Panc1 (cell line): ENCODE measurements at regions of chr19 and their contacts with region 1.

Region 1: GRCh38 chr19:33292595-33293441 is 9.5 kb downstream of the CEBPA start:
- DNase-seq: peak; percentile 30
- ATAC-seq: peak; percentile 45
- H3K4me3 ChIP-seq: no peak overlapping the region
- H3K27ac ChIP-seq: no peak overlapping the region
- H3K4me1 ChIP-seq: peaks cover 20% of the 10 kb centered on the region
- H3K27me3 ChIP-seq: 0 out of 2 replicates have a peak, but pooled peaks cover 2% of the 10 kb centered on the region
- CTCF ChIP-seq: no peak

Region 2: GRCh38 chr19:33161201-33161600 is 131.6 kb before region 1 on chr19:
- CTCF ChIA-PET with region 1: no interaction called
- POLR2A ChIA-PET with region 1: no interaction called
- in situ Hi-C with region 1: no loop called
- intact Hi-C with region 1: no loop called
- DNase-seq: no peak
- ATAC-seq: no peak
- H3K4me3 ChIP-seq: no peak overlapping the region
- H3K27ac ChIP-seq: no peak overlapping the region
- H3K4me1 ChIP-seq: no peaks in the 10 kb centered on the region
- H3K27me3 ChIP-seq: no peaks in the 10 kb centered on the region
- CTCF ChIP-seq: no peak

Region 3: GRCh38 chr19:33343859-33344572 is 51.2 kb after region 1 on chr19:
- CTCF ChIA-PET with region 1: no interaction called
- POLR2A ChIA-PET with region 1: no interaction called
- in situ Hi-C with region 1: loop called (anchors 10 kb)
- intact Hi-C with region 1: no loop called
- DNase-seq: no peak
- ATAC-seq: no peak
- H3K4me3 ChIP-seq: no peak overlapping the region
- H3K27ac ChIP-seq: no peak overlapping the region
- H3K4me1 ChIP-seq: no peaks in the 10 kb centered on the region; the same call in 1 of the 2 replicates
- H3K27me3 ChIP-seq: peaks cover 26% of the 10 kb centered on the region; the same call in 1 of the 2 replicates
- CTCF ChIP-seq: no peak